ENCODE measurements at regions of chr5 and their contacts with region 1.

Region 1: DNA sequence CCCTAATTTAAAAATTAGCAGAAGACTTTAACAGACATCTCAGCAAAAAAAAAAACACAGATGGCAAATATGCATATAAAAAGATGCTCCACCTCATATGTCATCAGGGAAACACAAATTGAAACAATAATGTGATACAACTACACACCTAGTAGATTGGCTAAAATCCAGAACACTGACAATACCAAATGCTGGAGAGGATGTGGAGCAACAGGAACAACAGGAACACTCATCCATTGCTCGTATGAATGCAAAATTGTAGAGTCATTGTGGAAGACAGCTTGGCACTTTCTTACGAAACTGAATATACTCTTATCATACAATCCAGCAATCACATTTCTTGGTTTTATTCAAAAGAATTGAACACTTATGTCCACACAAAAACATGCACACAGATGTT is 22.1 kb downstream of the MCIDAS start:
- DNase-seq: no peak
- H3K4me3 ChIP-seq: no peak overlapping the region
- H3K4me3 Mint-ChIP-seq: no peak overlapping the region
- H3K27ac ChIP-seq: no peak overlapping the region
- H3K27ac Mint-ChIP-seq: no peak overlapping the region
- H3K4me1 ChIP-seq: no peaks in the 10 kb centered on the region
- H3K4me1 Mint-ChIP-seq: peaks cover 2 to 8% (median 3%) of the 10 kb centered on the region in 3 donors
- H3K27me3 ChIP-seq: peaks cover 3% of the 10 kb centered on the region
- H3K27me3 Mint-ChIP-seq: peaks cover 23 to 56% of the 10 kb centered on the region in 2 donors

Region 2: DNA sequence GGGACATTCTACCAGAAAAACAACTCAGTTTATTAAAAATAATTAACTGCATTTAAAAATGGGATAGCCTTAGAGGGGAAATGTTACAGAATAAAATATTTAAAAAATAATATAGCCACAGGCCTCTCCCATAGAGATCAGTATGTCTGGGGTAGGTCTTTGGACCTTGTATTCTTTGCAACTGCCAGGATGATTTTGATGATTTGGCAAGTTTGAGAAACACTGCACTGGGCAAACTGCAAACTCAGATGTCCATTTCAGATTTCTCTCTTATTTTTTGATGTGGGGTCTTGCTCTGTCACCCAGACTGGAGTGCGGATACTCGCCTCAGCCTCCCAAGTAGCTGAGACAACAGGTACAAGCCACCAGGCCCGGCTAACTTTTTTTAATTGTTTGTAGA is 53.3 kb after region 1 on chr5:
- CTCF ChIA-PET with region 1: no interaction called
- POLR2A ChIA-PET with region 1: interaction called, 12 read pairs
- DNase-seq: no peak
- H3K4me3 ChIP-seq: no peak overlapping the region
- H3K4me3 Mint-ChIP-seq: no peak overlapping the region
- H3K27ac ChIP-seq: no peak overlapping the region
- H3K27ac Mint-ChIP-seq: no peak overlapping the region
- H3K4me1 ChIP-seq: no peaks in the 10 kb centered on the region
- H3K4me1 Mint-ChIP-seq: no peaks in the 10 kb centered on the region
- H3K27me3 ChIP-seq: no peaks in the 10 kb centered on the region
- H3K27me3 Mint-ChIP-seq: no peaks in the 10 kb centered on the region

Measured in CD8-positive, alpha-beta memory T cell (primary cell).